SK-N-SH (cell line): ENCODE measurements at regions of chr3 and their contacts with region 1.

Region 1: GRCh38 chr3:141426404-141427034 is 58.2 kb downstream of the ZBTB38 start:
- DNase-seq: no peak
- H3K4me3 ChIP-seq: no peak overlapping the region
- H3K27ac ChIP-seq: no peak overlapping the region
- H3K4me1 ChIP-seq: peaks cover 13 to 21% of the 10 kb centered on the region in 2 experiments; a peak in 2 of 4 replicates
- H3K27me3 ChIP-seq: no peaks in the 10 kb centered on the region
- CTCF ChIP-seq: no peak
- EP300 ChIP-seq: no peak
- RAD21 ChIP-seq: no peak

Region 2: GRCh38 chr3:141441381-141442364 is 15.2 kb after region 1 on chr3:
- CTCF ChIA-PET with region 1: interaction called, 17 read pairs
- POLR2A ChIA-PET with region 1: no interaction called
- DNase-seq: peak; percentile 69
- H3K4me3 ChIP-seq: no peak overlapping the region; a peak in 1 of 4 replicates
- H3K27ac ChIP-seq: peak overlapping the region in 1 of 2 experiments; percentile 51; a peak in 3 of 4 replicates
- H3K4me1 ChIP-seq: peaks cover 0 to 9% of the 10 kb centered on the region in 2 experiments; a peak in 2 of 4 replicates
- H3K27me3 ChIP-seq: no peaks in the 10 kb centered on the region
- CTCF ChIP-seq: peak; percentile 95
- EP300 ChIP-seq: no peak
- RAD21 ChIP-seq: peak; percentile 63